Cardiac septum (tissue), 1 donor: ENCODE measurements at regions of chr2 and their contacts with region 1.

Region 1: DNA sequence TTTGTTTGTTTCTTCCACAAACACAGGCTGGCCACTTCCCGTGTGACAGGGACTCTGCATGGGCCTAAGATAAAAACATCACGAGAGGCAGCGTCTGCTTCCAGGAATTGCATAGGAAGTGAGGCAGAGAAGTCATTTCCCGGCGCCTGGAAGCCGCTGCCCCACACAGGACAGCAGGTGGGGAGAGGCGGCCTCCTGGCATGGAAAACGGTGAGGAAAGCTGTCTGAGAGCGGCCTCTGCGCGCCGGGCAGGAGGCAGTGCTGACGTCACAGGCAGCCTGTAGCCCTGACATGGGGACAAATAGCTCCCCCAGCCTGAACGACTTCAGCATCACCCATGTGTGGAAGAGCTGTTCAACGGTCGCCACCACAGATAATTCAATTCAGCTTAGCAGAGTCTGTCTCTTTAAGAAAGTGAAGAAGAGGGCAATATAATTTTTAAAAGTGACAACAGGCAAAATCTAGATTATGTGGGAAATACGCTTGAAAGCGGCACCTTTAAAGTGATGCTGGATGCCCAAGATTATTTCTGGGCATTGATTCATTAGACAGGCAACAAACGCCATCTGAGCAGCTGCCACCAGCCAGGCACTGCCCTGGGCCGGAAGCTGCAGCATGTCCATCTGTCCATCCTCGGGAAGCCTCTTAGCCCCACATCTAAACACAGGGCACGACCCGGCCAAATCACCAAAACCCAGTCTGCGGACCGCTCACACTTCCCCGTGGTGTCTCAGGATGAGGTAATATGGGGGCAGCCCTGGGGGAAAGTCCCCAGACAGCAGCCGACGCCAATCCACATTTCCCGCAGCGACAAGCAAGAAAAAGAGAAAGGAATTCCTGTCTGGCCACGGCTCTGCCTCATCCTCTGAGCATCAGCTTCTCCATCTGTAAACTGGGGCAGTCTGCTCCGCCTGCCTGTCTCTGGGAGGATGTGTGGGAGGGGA is 138.9 kb downstream of the PXDN start:
- DNase-seq: peak; percentile 81

Region 2: GRCh38 chr2:1527153-1527992 is 78.0 kb before region 1 on chr2:
- intact Hi-C with region 1: no loop called
- DNase-seq: no peak

Region 3: GRCh38 chr2:1653956-1654695 is 48.8 kb after region 1 on chr2:
- intact Hi-C with region 1: loop called (anchors 5 kb)
- DNase-seq: no peak

Region 4: GRCh38 chr2:1664698-1665097 is 59.3 kb after region 1 on chr2:
- intact Hi-C with region 1: no loop called
- DNase-seq: peak; percentile 39